ENCODE measurements at regions of chr1 and their contacts with region 1.

Region 1: GRCh38 chr1:54671985-54672608 is 30.5 kb downstream of the MROH7 start:
- DNase-seq: peak; percentile 87
- ATAC-seq: peak; percentile 92
- H3K4me3 Mint-ChIP-seq: no peak overlapping the region
- H3K27ac Mint-ChIP-seq: peak overlapping the region; percentile 10
- H3K4me1 Mint-ChIP-seq: peaks cover 10% of the 10 kb centered on the region
- H3K27me3 Mint-ChIP-seq: peaks cover 28% of the 10 kb centered on the region

Region 2: DNA sequence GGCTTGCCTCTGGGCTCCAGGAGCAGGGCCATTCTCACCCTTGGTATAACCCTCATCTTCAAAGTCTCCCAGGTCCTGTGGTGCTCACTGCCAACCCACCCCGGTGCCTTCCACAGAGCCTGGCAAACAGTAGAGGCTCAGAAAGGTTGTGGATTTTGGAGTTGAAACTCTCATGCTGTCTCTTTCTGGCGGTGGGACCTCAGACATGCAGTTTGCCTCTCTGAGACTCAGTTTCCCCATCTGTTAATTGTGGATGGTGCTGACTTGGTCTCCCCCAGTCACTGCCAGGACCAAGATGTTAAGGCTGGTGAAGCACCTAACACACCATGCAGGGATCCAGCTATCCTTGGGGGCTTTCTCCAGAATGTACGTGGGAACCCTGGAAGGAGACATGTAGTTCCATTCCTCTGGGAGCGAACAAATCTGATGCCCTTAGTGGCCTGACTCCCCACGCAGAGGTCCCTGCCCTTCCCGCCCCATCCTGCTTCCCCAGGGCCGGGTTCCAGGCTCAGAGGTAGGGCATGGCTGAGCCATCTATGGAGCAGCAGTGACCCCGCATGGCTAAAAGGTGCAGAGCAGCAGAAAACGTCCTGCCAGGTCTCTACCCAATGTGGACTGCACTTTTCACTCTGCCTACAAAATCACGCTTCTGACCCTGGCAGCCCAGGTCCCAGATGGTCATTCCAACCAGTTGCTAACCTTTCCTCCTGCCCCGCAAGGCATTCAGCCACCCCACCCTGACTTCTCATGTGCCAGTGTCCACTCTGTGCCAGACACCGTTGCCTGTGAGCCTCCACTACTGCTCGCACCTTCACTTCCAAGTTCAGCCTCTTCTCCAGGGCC is 138.2 kb after region 1 on chr1:
- CTCF ChIA-PET with region 1: interaction called, 14 read pairs
- POLR2A ChIA-PET with region 1: no interaction called
- DNase-seq: peak; percentile 82
- ATAC-seq: peak; percentile 78
- H3K4me3 Mint-ChIP-seq: no peak overlapping the region
- H3K27ac Mint-ChIP-seq: peak overlapping the region; percentile 34
- H3K4me1 Mint-ChIP-seq: peaks cover 67% of the 10 kb centered on the region
- H3K27me3 Mint-ChIP-seq: peaks cover 2% of the 10 kb centered on the region